ENCODE measurements at regions of chr20 and their contacts with region 1.

Region 1: DNA sequence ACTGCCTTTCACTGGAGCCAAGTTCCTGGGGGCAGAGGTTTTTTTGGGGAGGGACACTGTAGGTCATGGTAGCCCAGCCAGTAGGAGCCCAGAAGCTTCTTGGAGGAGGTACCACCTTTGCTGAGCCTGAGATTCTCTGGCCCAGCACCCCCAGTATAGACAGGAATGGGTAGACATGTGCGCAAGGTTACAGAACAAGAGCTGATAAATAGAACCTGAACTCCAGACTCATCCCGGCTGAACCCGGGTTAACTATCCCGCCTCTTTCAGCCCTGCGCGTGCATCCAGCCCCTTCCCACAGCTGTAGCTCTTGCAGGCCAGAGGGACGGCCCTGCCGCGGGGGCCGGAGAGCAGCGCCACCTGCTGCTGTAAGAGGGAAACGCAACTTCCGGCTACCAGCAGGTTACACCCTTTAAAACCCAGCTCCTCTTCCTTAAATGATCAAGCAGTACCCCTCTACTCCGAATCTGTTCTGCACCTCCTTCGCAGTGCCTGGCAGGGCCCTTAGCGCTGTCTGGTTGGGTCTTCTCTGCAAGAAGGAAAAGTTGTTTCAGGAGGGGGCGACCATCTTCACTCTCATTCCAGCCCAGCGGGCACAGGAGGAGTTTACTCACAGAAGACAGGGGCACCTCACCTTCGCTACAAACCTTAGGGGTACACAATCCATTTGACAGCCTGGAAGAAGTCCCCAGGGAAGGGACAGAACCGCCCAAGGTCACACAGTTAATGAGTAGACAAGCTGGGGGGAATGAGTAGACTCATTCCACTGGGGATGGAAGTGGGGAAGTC is 7.5 kb downstream of the SRXN1 start:
- DNase-seq: peak; percentile 73 to 82
- ATAC-seq: peak; percentile 68 to 85 (median 82)
- H3K4me3 ChIP-seq: peak overlapping the region in 1 of 10 donors; percentile 6
- H3K27ac ChIP-seq: peak overlapping the region in 9 of 10 donors; percentile 1 to 67 (median 54)
- H3K4me1 ChIP-seq: peaks cover 2 to 34% (median 24%) of the 10 kb centered on the region in 9 donors
- H3K27me3 ChIP-seq: peaks cover 0 to 14% (median 0%) of the 10 kb centered on the region in 7 donors
- CTCF ChIP-seq: peak; percentile 90 to 99 (median 97)

Region 2: DNA sequence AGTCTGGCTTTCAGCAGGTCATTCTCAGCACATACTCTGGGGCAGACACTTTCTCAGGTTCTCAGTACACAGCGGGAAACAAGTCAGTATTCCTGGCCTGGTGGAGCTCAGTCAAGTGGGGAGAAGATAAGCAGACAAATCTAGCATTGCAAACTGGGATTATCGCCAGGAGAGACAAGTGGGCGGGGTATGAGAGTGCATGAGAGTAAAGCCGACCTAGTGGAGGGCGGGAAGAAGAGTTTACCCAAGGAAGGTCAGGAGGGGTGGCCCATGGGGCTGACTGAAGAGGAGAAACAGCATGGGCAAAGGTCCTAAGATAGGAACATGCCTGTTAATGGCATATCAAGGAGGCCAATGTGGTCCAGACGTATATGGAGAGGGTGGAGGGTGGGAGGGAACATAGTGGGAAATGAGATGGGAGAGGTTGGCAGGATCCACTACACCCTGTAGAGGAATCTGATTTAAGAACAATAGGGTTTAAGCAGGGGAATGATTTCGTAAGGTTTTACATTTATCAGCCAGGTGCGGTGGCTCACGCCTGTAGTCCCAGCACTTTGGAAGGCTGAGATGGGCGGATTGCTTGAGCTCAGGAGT is 89.5 kb before region 1 on chr20:
- intact Hi-C with region 1: loop called in 7 of 10 experiments (anchors 1 to 2 kb)
- DNase-seq: peak in 1 of 2 donors; percentile 75
- ATAC-seq: peak; percentile 75 to 96 (median 90)
- H3K4me3 ChIP-seq: no peak overlapping the region
- H3K27ac ChIP-seq: peak overlapping the region in 1 of 10 donors; percentile 9
- H3K4me1 ChIP-seq: peaks cover 0 to 16% (median 10%) of the 10 kb centered on the region in 9 donors
- H3K27me3 ChIP-seq: peaks cover 0 to 22% (median 0%) of the 10 kb centered on the region in 7 donors
- CTCF ChIP-seq: no peak

Region 3: GRCh38 chr20:602111-602970 is 43.2 kb before region 1 on chr20:
- intact Hi-C with region 1: loop called in 3 of 10 experiments (anchors 2 to 5 kb)
- DNase-seq: peak; percentile 82 to 83
- ATAC-seq: peak; percentile 74 to 88 (median 84)
- H3K4me3 ChIP-seq: peak overlapping the region in 2 of 10 donors; percentile 20 to 26
- H3K27ac ChIP-seq: peak overlapping the region; percentile 79 to 96 (median 90)
- H3K4me1 ChIP-seq: peaks cover 42 to 97% (median 67%) of the 10 kb centered on the region in 9 donors
- H3K27me3 ChIP-seq: no peaks in the 10 kb centered on the region
- CTCF ChIP-seq: peak in 1 of 9 donors; percentile 24